Dorsolateral prefrontal cortex (tissue), 120 donors: ENCODE measurements at regions of chr5 and their contacts with region 1.

Region 1: DNA sequence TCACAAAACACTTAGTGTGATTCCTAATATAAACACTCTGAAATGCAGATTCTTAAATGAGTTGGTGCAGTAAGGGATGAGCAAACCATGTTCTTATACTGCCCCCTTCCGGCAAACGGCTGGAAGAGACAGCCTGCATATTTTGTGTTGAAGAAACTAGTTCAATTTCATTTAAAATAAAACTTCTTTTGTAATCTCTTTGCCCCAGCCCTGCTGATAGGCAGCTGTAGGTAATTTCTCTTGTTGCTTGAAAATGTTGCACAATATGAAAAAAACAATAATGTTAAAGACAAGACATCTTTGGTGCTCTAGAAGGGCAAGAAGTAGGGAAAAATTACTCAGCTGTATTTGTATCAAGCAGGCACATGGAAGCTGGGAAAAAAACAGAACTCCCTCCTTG is 89.7 kb upstream of the CCNG1 start:
- DNase-seq: peak in 9 of 10 donors; percentile 48 to 86 (median 67)
- H3K4me3 ChIP-seq: peak overlapping the region in 1 of 59 donors; percentile 13
- H3K27ac ChIP-seq: peak overlapping the region in 23 of 59 donors; percentile 4 to 64 (median 41)
- H3K27me3 ChIP-seq: no peaks in the 10 kb centered on the region
- CTCF ChIP-seq: peak; percentile 68 to 93 (median 84)

Region 2: DNA sequence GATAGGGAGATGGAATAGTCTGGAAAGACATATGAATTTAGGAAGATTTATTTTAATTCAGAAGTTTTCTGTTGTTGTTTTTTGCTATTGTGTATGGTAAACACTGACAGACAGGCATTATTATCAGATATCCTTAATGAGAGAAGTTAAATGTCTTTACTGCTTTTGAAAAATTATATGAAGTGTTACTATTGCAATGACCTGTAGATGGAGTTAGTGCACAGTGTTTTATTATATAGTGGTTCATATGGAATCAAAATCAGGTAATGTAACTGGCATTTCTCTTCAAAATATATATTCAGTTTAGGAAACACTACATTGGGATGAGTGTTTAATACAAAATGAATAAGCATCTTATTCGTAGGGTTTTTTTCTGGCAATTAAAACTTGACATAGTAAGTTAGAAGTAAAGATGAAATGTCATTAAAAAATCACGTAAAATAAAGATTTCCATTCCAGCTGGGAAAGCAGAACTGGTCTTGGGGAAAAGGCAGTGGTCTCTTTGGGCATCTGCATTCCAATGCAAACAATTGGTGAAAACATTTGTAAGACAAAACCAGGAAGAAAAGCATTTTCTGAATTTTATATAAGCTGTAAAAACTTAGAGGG is 1495.9 kb before region 1 on chr5:
- intact Hi-C with region 1: loop called in 1 of 2 experiments (anchors 10 kb)
- DNase-seq: no peak
- H3K4me3 ChIP-seq: peak overlapping the region in 54 of 59 donors; percentile 5 to 73 (median 53)
- H3K27ac ChIP-seq: peak overlapping the region in 28 of 59 donors; percentile 0 to 77 (median 30)
- H3K27me3 ChIP-seq: peaks cover 0 to 54% (median 5%) of the 10 kb centered on the region in 45 donors
- CTCF ChIP-seq: peak in 53 of 56 donors; percentile 27 to 64 (median 46)

Region 3: DNA sequence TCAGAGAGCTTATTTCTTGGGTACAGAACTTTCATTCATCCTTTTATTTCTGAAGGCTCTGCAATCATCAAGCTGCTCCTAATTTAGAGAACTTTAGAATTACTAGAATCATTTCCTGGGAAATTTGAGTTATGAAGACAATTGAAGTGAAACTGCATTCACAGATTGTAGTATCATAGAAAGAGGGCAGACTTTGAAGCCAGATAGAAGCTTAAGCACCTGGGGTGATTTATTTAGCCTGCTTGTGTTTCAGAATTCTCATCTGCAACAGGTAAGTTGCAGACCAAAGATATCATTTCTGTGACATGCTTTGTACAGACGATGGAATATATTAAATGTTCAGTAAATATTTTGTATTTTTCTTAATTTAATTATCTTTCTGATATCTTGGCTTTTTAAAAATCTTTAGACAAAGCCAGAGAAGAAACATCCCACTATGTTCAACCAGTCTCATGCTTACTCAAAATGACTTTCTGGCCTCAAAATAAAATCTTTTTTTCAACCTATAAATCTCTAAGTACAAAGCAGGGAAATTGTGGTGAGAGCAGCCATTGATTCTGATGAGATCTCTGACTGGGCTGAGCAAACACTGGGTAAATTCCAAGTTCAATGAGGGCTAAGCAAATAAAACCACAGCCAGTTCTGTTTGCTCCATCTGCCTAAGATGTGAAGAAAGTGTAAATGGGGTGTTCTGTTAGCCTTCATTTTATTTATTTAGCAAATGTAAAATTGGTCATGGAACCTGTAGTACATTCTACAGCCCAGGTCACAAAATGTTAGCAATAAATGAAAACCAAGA is 174.9 kb before region 1 on chr5:
- intact Hi-C with region 1: no loop called
- DNase-seq: no peak
- H3K4me3 ChIP-seq: no peak overlapping the region
- H3K27ac ChIP-seq: no peak overlapping the region
- H3K27me3 ChIP-seq: no peaks in the 10 kb centered on the region
- CTCF ChIP-seq: no peak

Region 4: GRCh38 chr5:163293836-163294235 is 53.8 kb before region 1 on chr5:
- intact Hi-C with region 1: no loop called
- DNase-seq: no peak
- H3K4me3 ChIP-seq: no peak overlapping the region
- H3K27ac ChIP-seq: no peak overlapping the region
- H3K27me3 ChIP-seq: no peaks in the 10 kb centered on the region
- CTCF ChIP-seq: no peak